Prostate gland (tissue), 2 donors: ENCODE measurements at regions of chr7 and their contacts with region 1.

Region 1: DNA sequence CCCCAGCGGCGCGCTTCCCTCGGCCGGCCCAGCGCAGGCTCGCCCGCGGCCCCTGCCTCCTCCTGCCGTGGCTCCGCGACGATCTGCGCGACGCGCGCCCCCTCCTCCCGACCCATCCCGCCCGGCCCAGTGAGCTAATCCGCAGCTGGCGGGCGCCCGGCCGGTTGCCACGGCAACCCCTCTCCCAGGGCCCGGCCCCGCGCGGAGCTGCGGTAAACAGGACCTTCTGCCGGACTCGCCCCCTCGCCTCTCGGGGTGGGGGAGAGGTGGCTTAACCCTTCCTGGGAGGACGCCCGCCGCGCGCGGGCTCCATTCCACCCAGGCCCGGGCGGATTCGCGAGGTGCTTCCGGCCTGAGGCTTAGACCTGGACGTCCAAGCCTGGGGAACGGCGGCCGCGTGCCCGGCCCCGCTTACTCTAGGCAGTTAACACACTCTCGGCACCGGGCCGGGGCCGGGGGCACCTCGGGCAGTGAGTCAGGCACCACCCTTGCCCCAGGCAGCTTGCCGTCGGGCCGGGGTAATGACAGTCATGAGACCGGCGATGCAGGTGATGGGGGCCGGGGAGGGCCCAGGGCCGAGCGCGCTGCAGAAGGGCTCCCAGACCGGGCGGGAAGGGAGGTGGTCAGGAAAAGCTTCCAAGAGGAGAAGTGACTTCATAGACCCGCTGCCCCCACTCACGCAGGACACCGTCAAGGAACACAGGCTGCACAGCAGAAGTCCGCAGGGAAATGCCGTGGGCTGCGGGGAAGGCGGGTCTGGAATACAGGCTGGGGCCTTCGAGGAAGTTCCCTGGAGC is at the start of gene DENND2A:
- DNase-seq: peak; percentile 27
- H3K4me3 ChIP-seq: peak within 1 kb of the TSS; percentile 50 to 51
- H3K27ac ChIP-seq: peak within 1 kb of the TSS; percentile 70 to 78
- H3K4me1 ChIP-seq: no peaks in the 10 kb centered on the region
- H3K27me3 ChIP-seq: no peaks in the 10 kb centered on the region
- CTCF ChIP-seq: no peak
- POLR2A ChIP-seq: no peak
- total RNA-seq, gene DENND2A: 4.0 to 9.2 TPM

Region 2: GRCh38 chr7:140564643-140565042 is 76.3 kb before region 1 on chr7:
- intact Hi-C with region 1: loop called (anchors 2 kb)
- DNase-seq: no peak
- H3K4me3 ChIP-seq: no peak overlapping the region
- H3K27ac ChIP-seq: no peak overlapping the region
- H3K4me1 ChIP-seq: no peaks in the 10 kb centered on the region
- H3K27me3 ChIP-seq: no peaks in the 10 kb centered on the region
- CTCF ChIP-seq: no peak
- POLR2A ChIP-seq: no peak

Region 3: DNA sequence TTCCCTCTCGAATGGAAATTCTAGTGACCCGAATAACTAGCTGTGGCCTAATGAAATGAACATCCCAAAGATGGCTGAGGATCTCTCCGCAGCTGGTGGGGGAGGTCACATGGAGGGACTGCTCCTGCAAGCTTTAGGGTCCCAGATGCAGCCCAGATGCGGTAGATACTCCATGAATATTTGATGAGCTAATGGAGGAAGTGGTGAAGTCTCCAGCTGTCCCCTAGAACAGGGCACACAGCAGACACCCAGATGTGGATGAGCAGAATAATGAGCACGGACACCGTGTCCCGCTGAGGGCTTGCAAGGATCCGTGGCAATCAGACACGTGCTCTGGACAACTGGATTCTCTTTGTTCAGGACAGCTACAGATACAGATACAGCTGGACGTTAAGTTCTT is 59.5 kb before region 1 on chr7:
- intact Hi-C with region 1: no loop called
- DNase-seq: no peak
- H3K4me3 ChIP-seq: no peak overlapping the region
- H3K27ac ChIP-seq: no peak overlapping the region
- H3K4me1 ChIP-seq: no peaks in the 10 kb centered on the region
- H3K27me3 ChIP-seq: no peaks in the 10 kb centered on the region
- CTCF ChIP-seq: no peak
- POLR2A ChIP-seq: no peak

Region 4: GRCh38 chr7:140604760-140605159 is 36.2 kb before region 1 on chr7:
- intact Hi-C with region 1: loop called (anchors 5 kb)
- DNase-seq: no peak
- H3K4me3 ChIP-seq: no peak overlapping the region
- H3K27ac ChIP-seq: no peak overlapping the region
- H3K4me1 ChIP-seq: no peaks in the 10 kb centered on the region
- H3K27me3 ChIP-seq: no peaks in the 10 kb centered on the region
- CTCF ChIP-seq: no peak
- POLR2A ChIP-seq: no peak